Posterior vena cava (tissue), 2 donors: ENCODE measurements at regions of chr20 and their contacts with region 1.

Region 1: GRCh38 chr20:49691818-49692568 is 21.7 kb downstream of the B4GALT5 start:
- DNase-seq: no peak

Region 2: GRCh38 chr20:49676581-49677291 is 15.3 kb before region 1 on chr20:
- intact Hi-C with region 1: no loop called
- DNase-seq: no peak

Region 3: DNA sequence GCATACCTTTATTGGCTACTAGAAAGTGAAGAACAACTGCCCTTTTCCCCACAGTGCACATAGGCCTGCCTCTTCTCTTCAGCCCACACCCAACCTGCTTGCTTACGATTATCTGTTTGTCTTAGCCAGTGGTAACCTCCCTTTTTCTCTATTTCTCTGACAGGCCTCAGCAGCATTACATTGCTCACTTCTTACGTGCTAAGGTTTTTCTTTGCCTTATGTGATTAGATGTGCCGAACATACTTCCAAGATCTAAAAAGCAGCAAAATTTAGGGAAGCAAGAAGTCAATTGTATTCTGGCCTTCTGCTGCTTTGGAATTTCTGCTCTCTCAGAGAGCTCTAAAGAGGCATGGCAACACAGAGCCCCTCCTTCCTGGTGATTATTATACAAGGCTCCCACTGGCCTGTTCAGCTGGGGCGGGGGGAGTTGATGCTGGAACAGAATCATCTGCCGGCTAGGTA is 14.7 kb after region 1 on chr20:
- intact Hi-C with region 1: loop called in 1 of 2 experiments (anchors 1 kb)
- DNase-seq: no peak